ENCODE measurements at regions of chr7 and their contacts with region 1.

Region 1: DNA sequence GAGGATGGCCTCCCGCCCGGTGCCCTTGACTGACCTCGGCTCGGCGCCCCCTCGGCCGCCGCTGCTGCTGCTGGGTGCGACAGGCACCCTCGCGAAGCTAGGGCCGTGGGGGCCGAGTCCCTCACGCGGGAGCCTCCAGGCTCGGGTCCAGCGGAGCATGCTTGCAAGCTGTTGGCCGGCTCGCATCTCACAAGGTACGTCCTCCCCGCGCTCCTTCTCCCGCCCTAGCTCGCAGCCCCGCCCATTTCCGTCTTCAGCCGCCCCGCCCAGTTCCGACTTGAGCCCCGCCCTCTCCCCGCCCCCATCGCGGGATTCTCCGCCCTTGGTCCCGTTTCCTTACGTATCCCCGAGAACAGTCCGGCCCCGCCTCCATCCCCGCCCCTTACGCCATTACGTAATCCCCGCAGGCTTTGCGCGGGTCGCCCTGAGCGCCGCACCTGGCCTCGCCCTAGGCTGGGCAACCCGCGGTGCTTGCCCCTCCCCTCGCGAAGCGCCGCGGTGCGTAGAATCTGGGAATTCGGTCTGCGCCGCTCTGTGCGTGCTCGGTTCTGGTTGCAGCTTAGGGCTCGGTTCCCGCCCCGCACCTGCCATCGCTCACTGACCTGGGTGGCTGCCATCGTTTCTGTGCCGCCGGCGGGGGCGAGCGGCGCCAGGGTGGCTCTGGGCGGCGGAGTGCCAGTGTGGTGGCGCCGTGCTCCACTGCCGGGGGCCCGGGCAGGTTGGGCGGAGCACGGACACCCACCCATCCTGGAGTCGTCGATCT is at the start of gene ABHD11:
- DNase-seq: peak; percentile 95 to 99 (median 97)
- ATAC-seq: peak; percentile 95
- H3K4me3 ChIP-seq: peak within 1 kb of the TSS; percentile 84
- H3K4me3 Mint-ChIP-seq: peak within 1 kb of the TSS; percentile 83 to 94 (median 91)
- H3K27ac ChIP-seq: peak within 1 kb of the TSS; percentile 89
- H3K27ac Mint-ChIP-seq: peak within 1 kb of the TSS; percentile 79 to 96 (median 93)
- H3K4me1 ChIP-seq: peaks cover 4 to 18% of the 10 kb centered on the region in 2 donors
- H3K4me1 Mint-ChIP-seq: peaks cover 5 to 23% (median 16%) of the 10 kb centered on the region in 7 donors
- H3K27me3 ChIP-seq: no peaks in the 10 kb centered on the region
- H3K27me3 Mint-ChIP-seq: peaks cover 0 to 6% (median 0%) of the 10 kb centered on the region in 5 donors
- total RNA-seq, gene ABHD11: 12.3 to 22.7 (median 17.2) TPM

Region 2: DNA sequence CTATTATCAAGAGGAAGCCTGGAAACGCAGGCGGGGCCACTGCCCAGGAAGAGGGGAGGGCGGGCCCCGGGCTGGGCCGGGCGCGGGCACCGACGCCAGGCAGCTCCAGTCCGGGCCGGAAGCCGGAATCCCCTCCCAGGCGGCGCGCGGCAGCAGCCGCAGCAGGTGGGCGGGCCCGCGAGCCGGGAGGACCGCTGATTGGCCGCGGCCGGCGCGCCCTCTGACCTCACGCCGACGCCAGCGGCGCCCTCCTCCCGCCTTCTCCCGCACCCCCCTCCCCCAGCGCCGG is 181.7 kb before region 1 on chr7:
- CTCF ChIA-PET with region 1: no interaction called
- POLR2A ChIA-PET with region 1: no interaction called
- intact Hi-C with region 1: loop called (anchors 1 kb)
- DNase-seq: peak; percentile 86 to 95 (median 91)
- ATAC-seq: peak; percentile 93
- H3K4me3 ChIP-seq: peak overlapping the region; percentile 81
- H3K4me3 Mint-ChIP-seq: peak overlapping the region; percentile 88 to 97 (median 93)
- H3K27ac ChIP-seq: peak overlapping the region; percentile 100
- H3K27ac Mint-ChIP-seq: peak overlapping the region; percentile 92 to 98 (median 95)
- H3K4me1 ChIP-seq: peaks cover 17 to 23% of the 10 kb centered on the region in 2 donors
- H3K4me1 Mint-ChIP-seq: peaks cover 24 to 41% (median 33%) of the 10 kb centered on the region in 7 donors
- H3K27me3 ChIP-seq: no peaks in the 10 kb centered on the region
- H3K27me3 Mint-ChIP-seq: no peaks in the 10 kb centered on the region

Region 3: GRCh38 chr7:73623798-73624668 is 114.8 kb before region 1 on chr7 and contains the start of gene MLXIPL:
- CTCF ChIA-PET with region 1: no interaction called
- POLR2A ChIA-PET with region 1: no interaction called
- intact Hi-C with region 1: loop called in 1 of 2 experiments (anchors 5 kb)
- DNase-seq: peak in 7 of 9 donors; percentile 16 to 68 (median 30)
- ATAC-seq: peak; percentile 89
- H3K4me3 ChIP-seq: no peak within 1 kb of the TSS
- H3K4me3 Mint-ChIP-seq: peak within 1 kb of the TSS; percentile 25 to 78 (median 60)
- H3K27ac ChIP-seq: no peak within 1 kb of the TSS
- H3K27ac Mint-ChIP-seq: peak within 1 kb of the TSS in 1 of 9 donors; percentile 50
- H3K4me1 ChIP-seq: no peaks in the 10 kb centered on the region
- H3K4me1 Mint-ChIP-seq: peaks cover 0 to 9% (median 5%) of the 10 kb centered on the region in 7 donors
- H3K27me3 ChIP-seq: peaks cover 0 to 10% of the 10 kb centered on the region in 2 donors
- H3K27me3 Mint-ChIP-seq: peaks cover 38 to 74% (median 44%) of the 10 kb centered on the region in 5 donors
- total RNA-seq, gene MLXIPL: not detected

Region 4: GRCh38 chr7:73718905-73719805 is 19.6 kb before region 1 on chr7 and contains the start of gene STX1A:
- CTCF ChIA-PET with region 1: no interaction called
- POLR2A ChIA-PET with region 1: interaction called, 5 read pairs
- intact Hi-C with region 1: loop called (anchors 1 kb)
- DNase-seq: peak; percentile 57 to 83 (median 69)
- ATAC-seq: peak; percentile 87
- H3K4me3 ChIP-seq: peak within 1 kb of the TSS; percentile 68
- H3K4me3 Mint-ChIP-seq: peak within 1 kb of the TSS; percentile 72 to 92 (median 84)
- H3K27ac ChIP-seq: peak within 1 kb of the TSS; percentile 71
- H3K27ac Mint-ChIP-seq: peak within 1 kb of the TSS in 8 of 9 donors; percentile 14 to 87 (median 81)
- H3K4me1 ChIP-seq: peaks cover 16 to 22% of the 10 kb centered on the region in 2 donors
- H3K4me1 Mint-ChIP-seq: peaks cover 8 to 32% (median 17%) of the 10 kb centered on the region in 7 donors
- H3K27me3 ChIP-seq: no peaks in the 10 kb centered on the region
- H3K27me3 Mint-ChIP-seq: peaks cover 0 to 24% (median 5%) of the 10 kb centered on the region in 5 donors
- total RNA-seq, gene STX1A: 9.6 to 13.4 (median 10.5) TPM

Region 5: GRCh38 chr7:74083117-74083876 is 344.5 kb after region 1 on chr7 and contains the start of gene LIMK1:
- CTCF ChIA-PET with region 1: no interaction called
- POLR2A ChIA-PET with region 1: no interaction called
- intact Hi-C with region 1: loop called (anchors 2 kb)
- DNase-seq: peak; percentile 71 to 90 (median 83)
- ATAC-seq: peak; percentile 98
- H3K4me3 ChIP-seq: peak within 1 kb of the TSS; percentile 44
- H3K4me3 Mint-ChIP-seq: peak within 1 kb of the TSS; percentile 66 to 89 (median 80)
- H3K27ac ChIP-seq: peak within 1 kb of the TSS; percentile 69
- H3K27ac Mint-ChIP-seq: peak within 1 kb of the TSS in 8 of 9 donors; percentile 18 to 89 (median 76)
- H3K4me1 ChIP-seq: peaks cover 7 to 11% of the 10 kb centered on the region in 2 donors
- H3K4me1 Mint-ChIP-seq: peaks cover 0 to 18% (median 9%) of the 10 kb centered on the region in 7 donors
- H3K27me3 ChIP-seq: no peaks in the 10 kb centered on the region
- H3K27me3 Mint-ChIP-seq: no peaks in the 10 kb centered on the region
- total RNA-seq, gene LIMK1: 11.0 to 19.7 (median 14.1) TPM

Region 6: DNA sequence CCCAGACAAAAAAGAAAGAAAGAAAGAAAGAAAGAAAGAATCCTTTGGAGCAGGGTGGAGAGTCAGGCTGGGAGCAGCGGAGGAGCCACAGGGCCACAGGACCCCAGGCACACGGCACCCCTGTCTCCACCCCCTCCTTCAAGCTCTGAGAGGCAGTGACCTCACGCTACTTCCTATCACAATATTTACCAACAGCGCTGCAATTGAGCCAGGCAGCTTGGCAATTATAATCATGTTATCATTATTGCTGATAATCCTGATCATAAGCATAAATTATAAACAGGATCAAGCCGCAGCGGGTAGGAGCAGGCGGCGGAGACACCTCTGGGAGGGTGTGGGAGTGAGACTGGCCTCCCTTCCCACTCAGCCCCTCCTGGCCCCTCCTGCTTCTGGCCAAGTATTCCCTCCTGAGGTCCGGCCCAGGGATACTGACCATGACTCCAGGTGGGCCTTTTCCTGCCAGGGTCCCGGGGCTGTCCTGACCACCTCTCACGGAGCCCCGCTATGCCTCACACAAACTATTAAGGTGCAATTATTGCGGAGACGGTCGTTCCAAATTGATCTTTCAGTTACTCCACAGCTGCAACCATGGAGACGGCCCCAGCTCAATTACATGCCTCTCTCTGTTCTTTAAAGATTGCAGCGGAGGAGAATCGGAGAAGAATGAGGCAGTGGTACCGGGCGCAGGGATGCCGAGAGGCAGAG is 704.9 kb after region 1 on chr7:
- CTCF ChIA-PET with region 1: no interaction called
- POLR2A ChIA-PET with region 1: no interaction called
- intact Hi-C with region 1: no loop called
- DNase-seq: no peak
- ATAC-seq: no peak
- H3K4me3 ChIP-seq: no peak overlapping the region
- H3K4me3 Mint-ChIP-seq: no peak overlapping the region
- H3K27ac ChIP-seq: no peak overlapping the region
- H3K27ac Mint-ChIP-seq: no peak overlapping the region
- H3K4me1 ChIP-seq: no peaks in the 10 kb centered on the region
- H3K4me1 Mint-ChIP-seq: no peaks in the 10 kb centered on the region
- H3K27me3 ChIP-seq: no peaks in the 10 kb centered on the region
- H3K27me3 Mint-ChIP-seq: no peaks in the 10 kb centered on the region